Activated CD8-positive, alpha-beta memory T cell treated with anti-CD3 and anti-CD28 coated beads, Interleukin-2, amount 10 ng/mL, durations not matched to agents 7 days and 5 days (primary cell): ENCODE measurements at regions of chr19 and their contacts with region 1.

Region 1: GRCh38 chr19:55653758-55654539 is 886 bp upstream of the U2AF2 start:
- DNase-seq: peak; percentile 100
- ATAC-seq: peak; percentile 81
- H3K4me3 Mint-ChIP-seq: peak overlapping the region; percentile 88
- H3K27ac Mint-ChIP-seq: peak overlapping the region; percentile 95
- H3K4me1 Mint-ChIP-seq: peaks cover 35% of the 10 kb centered on the region
- H3K27me3 Mint-ChIP-seq: no peaks in the 10 kb centered on the region

Region 2: DNA sequence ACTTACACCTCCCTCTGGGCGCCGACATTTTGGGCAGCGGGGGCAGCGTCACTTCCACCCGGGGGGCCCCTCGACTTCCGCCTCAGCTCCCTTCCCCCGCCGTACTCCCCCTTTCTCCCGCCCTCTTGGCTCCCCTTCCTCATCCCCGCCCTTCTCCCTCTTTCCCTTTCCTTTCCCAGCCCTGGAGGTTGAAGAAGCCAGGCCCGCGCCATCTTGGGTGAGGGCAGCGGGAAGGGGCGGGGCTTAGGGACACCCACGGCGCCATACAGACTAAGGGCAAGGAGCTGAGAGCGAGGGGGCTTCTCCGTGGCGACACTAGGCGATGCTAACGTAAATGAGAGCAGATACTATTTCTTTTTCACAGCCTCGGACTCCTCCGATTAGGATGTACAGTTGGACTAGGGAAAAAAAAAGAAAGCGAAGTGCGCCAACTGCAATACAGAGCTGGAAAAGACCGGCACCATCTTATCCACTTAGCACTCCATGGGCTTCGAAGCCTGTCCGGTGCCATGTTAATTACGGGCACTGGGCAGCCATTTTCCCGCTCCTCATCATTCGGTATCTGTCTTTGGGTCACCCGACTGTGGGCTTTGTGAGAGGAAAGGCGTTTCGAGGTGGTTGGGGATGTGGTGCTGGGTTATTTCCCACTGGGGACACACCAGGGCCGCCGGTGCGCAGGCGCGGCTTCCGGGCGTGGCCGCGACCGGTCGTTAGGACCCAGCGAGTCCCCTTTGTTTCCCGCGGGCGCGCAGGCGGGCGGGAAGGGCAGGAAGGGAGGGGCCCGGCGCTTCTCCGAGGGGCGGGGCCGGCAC is 54.3 kb before region 1 on chr19 and contains the start of gene FIZ1:
- CTCF ChIA-PET with region 1: interaction called, 17 read pairs
- DNase-seq: peak; percentile 98
- ATAC-seq: peak; percentile 77
- H3K4me3 Mint-ChIP-seq: peak within 1 kb of the TSS; percentile 86
- H3K27ac Mint-ChIP-seq: peak within 1 kb of the TSS; percentile 99
- H3K4me1 Mint-ChIP-seq: peaks cover 27% of the 10 kb centered on the region
- H3K27me3 Mint-ChIP-seq: no peaks in the 10 kb centered on the region
- total RNA-seq, gene FIZ1: 13.0 to 15.7 TPM

Region 3: DNA sequence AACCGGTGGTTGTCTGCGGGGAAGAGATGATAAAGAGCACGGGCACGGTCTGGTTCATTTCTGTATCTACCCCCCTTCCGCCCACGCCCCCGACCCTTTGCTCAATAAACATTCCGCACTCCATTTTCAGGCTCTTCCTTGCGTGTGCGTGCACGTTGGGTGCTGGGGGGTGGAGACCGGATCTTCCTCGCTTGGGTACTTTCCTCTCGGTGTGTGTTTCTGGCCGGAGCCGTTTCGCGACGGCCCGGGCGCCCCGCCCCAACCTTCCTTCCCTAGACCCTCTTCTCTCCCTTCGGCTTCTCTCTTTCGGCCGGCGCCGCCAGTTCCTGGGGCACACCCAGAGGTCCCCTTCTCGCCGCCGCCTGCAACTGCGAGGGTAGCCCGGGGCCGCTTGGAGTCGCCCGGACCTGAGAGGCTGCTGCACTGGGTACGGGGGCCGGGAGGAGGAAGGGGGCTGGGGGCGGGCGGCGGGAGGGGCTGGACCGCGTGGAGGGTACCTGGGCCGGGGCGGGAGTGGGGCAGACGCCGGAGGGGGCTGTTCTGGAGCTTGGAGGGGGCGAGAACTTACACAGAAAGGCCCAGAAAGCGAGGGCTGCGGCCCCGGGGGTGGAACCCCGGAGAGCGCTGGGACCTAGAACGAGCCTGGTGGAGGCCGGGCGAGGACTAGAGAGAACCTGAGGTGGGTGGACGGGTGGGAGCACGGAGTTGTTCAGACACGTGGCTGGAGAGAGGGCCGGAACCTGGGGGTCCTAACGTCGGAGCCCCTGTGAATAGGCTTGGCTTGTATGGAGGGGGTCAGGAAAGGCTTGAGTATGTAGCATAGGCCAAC is 10.4 kb before region 1 on chr19 and contains the start of gene ZNF581:
- CTCF ChIA-PET with region 1: interaction called, 104 read pairs
- DNase-seq: peak; percentile 85
- ATAC-seq: peak; percentile 66
- H3K4me3 Mint-ChIP-seq: peak within 1 kb of the TSS; percentile 87
- H3K27ac Mint-ChIP-seq: peak within 1 kb of the TSS; percentile 95
- H3K4me1 Mint-ChIP-seq: peaks cover 47% of the 10 kb centered on the region
- H3K27me3 Mint-ChIP-seq: no peaks in the 10 kb centered on the region
- total RNA-seq, gene ZNF581: 23.7 to 25.4 TPM

Region 4: GRCh38 chr19:55670280-55671053 is 16.5 kb after region 1 on chr19:
- CTCF ChIA-PET with region 1: interaction called, 12 read pairs
- DNase-seq: no peak
- ATAC-seq: no peak
- H3K4me3 Mint-ChIP-seq: no peak overlapping the region
- H3K27ac Mint-ChIP-seq: no peak overlapping the region
- H3K4me1 Mint-ChIP-seq: peaks cover 26% of the 10 kb centered on the region
- H3K27me3 Mint-ChIP-seq: no peaks in the 10 kb centered on the region